ENCODE measurements at regions of chr11 and their contacts with region 1.

Region 1: DNA sequence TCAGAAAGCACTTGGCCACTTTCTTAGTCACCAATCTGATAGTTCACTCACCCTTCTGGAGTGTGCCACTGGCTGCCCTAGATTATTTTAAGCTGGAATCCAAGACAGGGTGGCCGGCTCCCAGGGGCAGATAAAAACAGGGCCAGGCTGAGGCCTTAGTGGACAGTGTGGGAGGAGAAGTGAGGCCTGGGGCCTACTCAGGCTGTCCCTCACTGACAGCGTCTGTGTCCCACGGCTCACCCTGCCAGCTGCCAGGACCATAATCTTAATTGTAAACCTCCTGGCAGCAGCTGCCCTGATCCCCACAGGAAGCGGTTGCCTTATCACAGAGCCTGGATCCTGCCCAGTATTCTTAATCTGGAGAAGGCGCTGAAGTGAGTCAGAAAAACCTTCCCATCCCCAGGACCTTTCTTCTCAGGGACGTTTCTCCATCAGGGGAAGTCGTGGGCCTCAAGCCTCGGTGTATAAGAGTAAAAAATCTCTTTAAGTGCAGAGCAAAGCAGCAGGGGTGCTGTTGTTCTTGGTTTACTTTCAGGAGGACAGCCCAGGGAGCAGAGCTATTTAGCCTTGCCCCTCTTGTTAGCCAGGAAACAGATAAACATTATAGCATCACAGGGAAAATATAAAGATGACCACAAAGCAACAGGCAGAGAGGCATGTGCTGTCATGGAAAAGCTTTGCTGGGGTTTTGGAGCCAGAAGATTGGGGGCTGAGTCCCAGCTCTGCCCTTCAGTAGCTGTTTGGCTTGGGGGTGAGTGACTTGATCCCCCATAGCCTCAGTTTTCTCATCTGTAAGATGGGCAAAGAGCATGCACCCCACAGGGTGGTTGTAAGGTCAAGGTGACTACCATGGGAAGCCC is 39.6 kb downstream of the TSPAN18 start:
- DNase-seq: peak; percentile 87 to 92 (median 92)
- ATAC-seq: peak; percentile 90 to 91
- H3K4me3 ChIP-seq: no peak overlapping the region
- H3K27ac ChIP-seq: peak overlapping the region; percentile 99
- H3K4me1 ChIP-seq: peaks cover 30% of the 10 kb centered on the region
- H3K27me3 ChIP-seq: no peaks in the 10 kb centered on the region

Region 2: GRCh38 chr11:44861849-44862749 is 95.8 kb after region 1 on chr11:
- intact Hi-C with region 1: loop called in 1 of 4 experiments (anchors 2 kb)
- DNase-seq: peak; percentile 87 to 91 (median 89)
- ATAC-seq: peak; percentile 90 to 92
- H3K4me3 ChIP-seq: no peak overlapping the region
- H3K27ac ChIP-seq: peak overlapping the region; percentile 94
- H3K4me1 ChIP-seq: peaks cover 13% of the 10 kb centered on the region
- H3K27me3 ChIP-seq: no peaks in the 10 kb centered on the region